IMR-90 (cell line): ENCODE measurements at regions of chr20 and their contacts with region 1.

Region 1: GRCh38 chr20:32168184-32168905 is 39.2 kb downstream of the PLAGL2 start:
- DNase-seq: peak; percentile 58
- ATAC-seq: peak; percentile 83
- H3K4me3 ChIP-seq: no peak overlapping the region
- H3K27ac ChIP-seq: no peak overlapping the region; the same call in 1 of the 2 replicates
- H3K4me1 ChIP-seq: peaks cover 7% of the 10 kb centered on the region; the same call in 1 of the 2 replicates
- H3K27me3 ChIP-seq: no peaks in the 10 kb centered on the region
- CTCF ChIP-seq: no peak
- POLR2A ChIP-seq: no peak
- RAD21 ChIP-seq: no peak

Region 2: DNA sequence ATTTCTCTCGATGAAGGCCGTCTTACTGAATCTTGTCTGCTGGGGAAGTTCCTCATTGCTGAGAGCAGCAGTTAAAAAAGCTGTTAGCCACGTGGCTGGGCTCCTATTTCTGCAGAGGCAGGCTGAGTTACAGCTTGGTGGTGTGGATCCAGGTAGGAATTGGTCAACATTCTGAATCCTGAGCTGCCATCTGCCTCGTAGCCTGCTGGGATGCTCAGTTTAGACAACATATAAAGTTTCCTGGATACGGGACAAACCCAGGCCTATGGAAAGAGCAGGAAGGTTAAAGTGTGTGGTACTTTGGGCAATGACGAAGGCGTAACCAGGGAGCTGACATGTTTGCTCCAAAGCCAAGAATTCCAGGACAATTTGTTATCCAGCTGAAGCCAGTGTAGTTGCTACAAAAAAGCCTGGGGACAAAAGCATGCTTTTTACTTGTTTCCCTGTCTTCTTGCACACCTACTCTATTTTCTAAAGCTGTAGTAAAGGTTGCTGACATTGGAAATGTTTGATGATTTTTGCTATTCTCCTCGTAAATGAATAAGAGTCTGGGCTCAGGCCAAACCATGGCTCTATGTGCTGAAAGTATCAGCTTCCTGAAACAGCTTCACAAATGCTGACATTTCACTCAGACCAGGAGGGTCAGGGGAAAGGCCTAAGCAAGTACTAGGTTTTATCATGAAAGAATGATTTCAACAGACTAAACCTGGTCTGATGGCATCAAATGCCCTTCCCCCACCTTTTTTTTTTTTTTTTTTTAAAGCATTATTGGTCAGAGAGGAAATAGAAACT is 361.6 kb before region 1 on chr20:
- CTCF ChIA-PET with region 1: no interaction called
- POLR2A ChIA-PET with region 1: no interaction called
- dilution Hi-C with region 1: no loop called
- in situ Hi-C with region 1: no loop called
- intact Hi-C with region 1: loop called (anchors 5 kb)
- DNase-seq: no peak
- ATAC-seq: no peak
- H3K4me3 ChIP-seq: no peak overlapping the region
- H3K27ac ChIP-seq: no peak overlapping the region
- H3K4me1 ChIP-seq: peaks cover 11% of the 10 kb centered on the region
- H3K27me3 ChIP-seq: no peaks in the 10 kb centered on the region
- CTCF ChIP-seq: no peak
- POLR2A ChIP-seq: no peak
- RAD21 ChIP-seq: no peak

Region 3: DNA sequence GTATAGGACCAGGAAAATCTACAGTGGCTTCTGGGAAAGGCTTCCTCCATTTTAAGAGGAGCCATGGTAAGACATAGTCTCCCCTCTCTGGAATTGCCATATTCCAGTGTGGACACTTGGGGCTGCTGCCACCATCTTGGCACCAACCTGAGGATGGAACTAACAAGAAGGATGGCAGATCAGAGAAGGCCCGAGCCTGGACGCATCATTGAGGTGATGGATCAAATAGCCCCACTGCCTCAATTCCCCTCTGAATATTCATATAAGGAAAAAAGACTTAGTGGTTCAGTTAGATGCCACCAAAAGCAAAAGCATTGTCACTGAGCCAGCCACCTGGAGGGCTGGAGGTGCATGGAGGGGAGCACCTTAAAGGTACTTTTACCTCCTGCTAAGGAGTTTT is 13.3 kb after region 1 on chr20:
- CTCF ChIA-PET with region 1: interaction called, 3 read pairs
- POLR2A ChIA-PET with region 1: no interaction called
- dilution Hi-C with region 1: no loop called
- in situ Hi-C with region 1: no loop called
- intact Hi-C with region 1: loop called (anchors 1 kb)
- DNase-seq: no peak
- ATAC-seq: no peak
- H3K4me3 ChIP-seq: no peak overlapping the region
- H3K27ac ChIP-seq: no peak overlapping the region
- H3K4me1 ChIP-seq: no peaks in the 10 kb centered on the region
- H3K27me3 ChIP-seq: no peaks in the 10 kb centered on the region
- CTCF ChIP-seq: no peak
- POLR2A ChIP-seq: no peak
- RAD21 ChIP-seq: no peak